Caco-2 (cell line): ENCODE measurements at regions of chr19 and their contacts with region 1.

Region 1: DNA sequence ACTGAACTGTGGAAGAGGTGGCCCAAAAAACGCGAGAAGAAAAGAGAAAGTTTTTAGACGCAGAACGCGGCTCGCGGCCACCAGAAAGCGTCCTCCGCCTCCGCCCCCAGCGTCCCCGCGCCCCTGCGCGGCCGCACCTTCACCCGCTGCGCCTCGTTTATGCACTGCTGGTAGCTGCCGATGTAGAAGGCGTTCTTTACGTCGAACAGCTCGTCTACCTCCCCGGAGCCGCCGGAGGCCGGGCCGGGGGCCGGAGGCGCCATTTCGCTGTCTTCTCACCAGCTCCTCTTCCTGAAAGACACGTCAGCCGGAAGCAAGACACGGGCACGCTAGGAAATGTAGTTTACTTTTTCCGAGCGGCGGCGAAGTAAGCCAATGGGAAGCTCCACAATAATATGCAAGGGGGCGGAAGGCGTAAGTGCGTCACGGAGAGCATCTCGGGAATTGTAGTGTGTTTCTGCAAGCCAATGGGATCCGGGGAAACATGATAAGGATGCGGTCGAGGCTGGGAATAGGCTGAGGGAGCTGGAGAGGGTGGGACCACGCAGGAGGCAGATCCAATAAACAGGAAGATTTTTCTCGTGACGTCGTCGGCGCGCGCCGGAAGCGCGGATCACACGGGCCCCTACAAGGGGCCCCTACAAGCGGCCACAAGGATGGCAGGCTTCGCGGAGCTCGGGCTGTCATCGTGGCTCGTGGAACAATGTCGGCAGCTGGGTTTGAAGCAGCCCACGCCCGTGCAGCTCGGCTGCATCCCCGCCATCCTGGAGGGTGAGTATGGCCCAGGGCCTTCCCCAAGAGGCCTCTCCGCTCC is at the starts of genes COPE and DDX49:
- DNase-seq: peak; percentile 96 to 98
- H3K4me3 ChIP-seq: peak within 1 kb of the TSS; percentile 90
- H3K4me3 Mint-ChIP-seq: peak within 1 kb of the TSS; percentile 73
- H3K27ac Mint-ChIP-seq: peak within 1 kb of the TSS; percentile 92
- H3K4me1 ChIP-seq: peaks cover 5% of the 10 kb centered on the region
- H3K4me1 Mint-ChIP-seq: no peaks in the 10 kb centered on the region
- H3K27me3 ChIP-seq: no peaks in the 10 kb centered on the region
- H3K27me3 Mint-ChIP-seq: no peaks in the 10 kb centered on the region
- CTCF ChIP-seq: no peak
- total RNA-seq, gene COPE: 207 and 213 TPM in 2 replicates
- total RNA-seq, gene DDX49: 46.8 and 48.7 TPM in 2 replicates

Region 2: DNA sequence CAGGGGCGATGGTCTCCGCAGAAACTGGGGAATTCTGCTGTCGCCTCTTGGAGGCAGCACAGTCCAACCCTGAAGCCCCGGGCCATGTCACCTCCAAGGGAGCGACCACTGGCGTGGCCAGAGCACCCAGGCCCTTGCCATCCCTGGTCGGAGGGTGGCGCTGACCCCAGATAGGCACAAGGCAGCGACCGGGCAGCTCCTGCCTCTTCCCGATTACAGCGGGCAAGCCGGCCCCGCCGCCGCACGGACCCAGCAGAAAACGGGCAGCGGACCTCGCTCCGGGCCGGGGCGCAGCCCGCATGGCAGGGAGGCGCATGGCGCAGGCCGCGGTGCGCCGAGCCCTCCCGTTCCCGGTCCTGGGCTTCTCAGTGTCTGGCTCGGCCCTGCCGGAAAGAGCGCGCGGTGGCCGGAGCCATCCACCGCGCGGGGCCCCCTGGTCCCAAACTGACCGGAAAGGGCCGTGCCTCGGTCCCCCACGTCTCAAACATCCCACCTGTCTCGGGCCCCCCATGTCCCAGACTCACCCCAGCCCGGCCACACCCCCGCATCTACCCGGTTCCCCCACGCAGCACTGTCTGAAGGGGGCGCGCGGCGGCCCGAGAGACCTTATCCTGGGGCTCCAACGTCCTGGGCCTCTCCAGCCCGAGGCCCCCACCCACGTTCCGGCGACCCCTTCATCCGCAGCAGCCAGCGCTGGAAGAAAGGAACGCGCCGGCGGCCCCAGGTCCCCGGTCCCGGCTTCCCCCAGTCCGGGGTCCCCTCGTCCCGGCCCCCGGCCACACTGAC is 24.1 kb before region 1 on chr19:
- CTCF ChIA-PET with region 1: interaction called, 3 read pairs
- POLR2A ChIA-PET with region 1: interaction called, 7 read pairs
- intact Hi-C with region 1: loop called (anchors 2 kb)
- DNase-seq: peak; percentile 84 to 86
- H3K4me3 ChIP-seq: peak overlapping the region; percentile 70
- H3K4me3 Mint-ChIP-seq: peak overlapping the region; percentile 74
- H3K27ac Mint-ChIP-seq: no peak overlapping the region
- H3K4me1 ChIP-seq: peaks cover 17% of the 10 kb centered on the region
- H3K4me1 Mint-ChIP-seq: no peaks in the 10 kb centered on the region
- H3K27me3 ChIP-seq: no peaks in the 10 kb centered on the region
- H3K27me3 Mint-ChIP-seq: no peaks in the 10 kb centered on the region
- CTCF ChIP-seq: peak; percentile 61 to 74

Region 3: DNA sequence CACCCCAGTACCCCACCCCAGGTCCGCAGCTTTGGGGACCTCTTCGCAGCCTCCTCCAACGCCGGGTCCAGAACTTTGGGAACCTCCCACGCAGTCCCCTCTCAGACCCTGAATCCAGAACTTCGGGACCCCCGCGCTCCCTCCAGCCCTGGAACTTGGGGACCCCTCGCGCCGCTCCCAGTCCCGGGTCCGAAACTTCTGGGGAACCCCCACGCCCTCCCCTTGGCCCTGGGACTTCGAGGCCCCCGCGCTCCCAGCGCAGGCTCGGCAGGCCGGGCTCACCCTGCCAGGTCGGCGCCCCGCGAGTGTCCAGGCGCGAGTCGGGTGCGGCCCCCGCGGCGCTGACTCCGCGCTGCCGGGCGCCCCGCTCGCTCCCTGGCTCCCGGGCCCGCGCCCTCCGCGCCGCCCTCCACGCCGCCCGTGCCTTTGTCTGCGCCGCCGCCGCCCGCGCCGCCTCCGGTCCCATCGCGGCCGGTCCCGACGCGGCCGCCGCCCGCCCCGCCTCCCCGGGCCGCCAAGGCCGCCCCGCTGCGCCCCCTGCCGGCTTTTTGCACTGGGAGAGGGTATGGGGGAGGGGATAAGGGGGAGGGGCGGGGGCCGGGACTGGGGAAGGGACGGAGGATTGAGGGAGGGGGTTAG is 21.6 kb after region 1 on chr19 and contains the start of gene HOMER3:
- CTCF ChIA-PET with region 1: no interaction called
- POLR2A ChIA-PET with region 1: no interaction called
- intact Hi-C with region 1: loop called (anchors 2 kb)
- DNase-seq: peak; percentile 63 to 85
- H3K4me3 ChIP-seq: peak within 1 kb of the TSS; percentile 81
- H3K4me3 Mint-ChIP-seq: peak within 1 kb of the TSS; percentile 77
- H3K27ac Mint-ChIP-seq: peak within 1 kb of the TSS; percentile 73
- H3K4me1 ChIP-seq: no peaks in the 10 kb centered on the region
- H3K4me1 Mint-ChIP-seq: peaks cover 12% of the 10 kb centered on the region
- H3K27me3 ChIP-seq: no peaks in the 10 kb centered on the region
- H3K27me3 Mint-ChIP-seq: no peaks in the 10 kb centered on the region
- CTCF ChIP-seq: peak; percentile 17 to 54
- total RNA-seq, gene HOMER3: 18.0 and 19.0 TPM in 2 replicates